ENCODE measurements at regions of chr5 and their contacts with region 1.

Region 1: GRCh38 chr5:171342362-171343111 is 33.5 kb downstream of the TLX3 start:
- DNase-seq: peak; percentile 3
- H3K4me3 Mint-ChIP-seq: no peak overlapping the region
- H3K27ac Mint-ChIP-seq: no peak overlapping the region
- H3K4me1 Mint-ChIP-seq: no peaks in the 10 kb centered on the region
- H3K27me3 Mint-ChIP-seq: peaks cover 11% of the 10 kb centered on the region

Region 2: DNA sequence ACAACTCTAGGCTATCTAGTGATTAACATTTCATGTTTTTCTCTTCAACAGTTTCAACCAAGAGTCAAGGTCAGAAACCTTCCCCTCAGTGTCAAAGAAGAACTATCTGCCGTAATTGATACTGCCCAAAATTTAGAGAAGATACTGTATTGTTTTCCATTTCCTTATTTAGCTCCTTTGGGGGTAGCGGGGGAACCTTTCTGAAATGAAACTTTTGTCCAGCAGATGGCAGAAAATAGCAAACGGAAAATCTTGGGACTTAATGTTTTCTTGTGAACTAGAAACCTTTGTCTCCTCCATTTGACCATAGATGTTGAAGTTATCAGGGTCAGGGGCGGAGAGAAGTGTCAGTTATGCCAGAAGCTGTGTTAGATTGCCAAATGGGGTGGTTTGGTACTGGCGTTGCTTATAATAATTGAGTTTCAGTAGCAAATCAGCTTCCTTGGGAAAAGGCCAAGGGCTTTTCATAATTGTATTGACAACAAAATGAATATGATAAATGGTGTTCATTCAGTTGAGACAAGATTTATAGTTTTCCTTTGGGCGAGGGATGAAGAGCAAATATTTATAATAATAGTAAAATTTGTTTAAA is 135.2 kb before region 1 on chr5:
- intact Hi-C with region 1: loop called (anchors 1 kb)
- DNase-seq: no peak
- H3K4me3 Mint-ChIP-seq: no peak overlapping the region
- H3K27ac Mint-ChIP-seq: no peak overlapping the region
- H3K4me1 Mint-ChIP-seq: no peaks in the 10 kb centered on the region
- H3K27me3 Mint-ChIP-seq: peaks cover 2% of the 10 kb centered on the region

Region 3: GRCh38 chr5:171226105-171226754 is 116.3 kb before region 1 on chr5:
- intact Hi-C with region 1: no loop called
- DNase-seq: no peak
- H3K4me3 Mint-ChIP-seq: no peak overlapping the region
- H3K27ac Mint-ChIP-seq: no peak overlapping the region
- H3K4me1 Mint-ChIP-seq: no peaks in the 10 kb centered on the region
- H3K27me3 Mint-ChIP-seq: peaks cover 5% of the 10 kb centered on the region